Common myeloid progenitor, CD34-positive (primary cell): ENCODE measurements at regions of chrX and their contacts with region 1.

Region 1: GRCh38 chrX:109485470-109486340 is 3.8 kb upstream of the GUCY2F start:
- DNase-seq: peak; percentile 70 to 88 (median 82)
- H3K4me3 ChIP-seq: no peak overlapping the region
- H3K27ac ChIP-seq: no peak overlapping the region
- H3K4me1 ChIP-seq: no peaks in the 10 kb centered on the region
- H3K27me3 ChIP-seq: peaks cover 0 to 8% (median 0%) of the 10 kb centered on the region in 5 experiments

Region 2: DNA sequence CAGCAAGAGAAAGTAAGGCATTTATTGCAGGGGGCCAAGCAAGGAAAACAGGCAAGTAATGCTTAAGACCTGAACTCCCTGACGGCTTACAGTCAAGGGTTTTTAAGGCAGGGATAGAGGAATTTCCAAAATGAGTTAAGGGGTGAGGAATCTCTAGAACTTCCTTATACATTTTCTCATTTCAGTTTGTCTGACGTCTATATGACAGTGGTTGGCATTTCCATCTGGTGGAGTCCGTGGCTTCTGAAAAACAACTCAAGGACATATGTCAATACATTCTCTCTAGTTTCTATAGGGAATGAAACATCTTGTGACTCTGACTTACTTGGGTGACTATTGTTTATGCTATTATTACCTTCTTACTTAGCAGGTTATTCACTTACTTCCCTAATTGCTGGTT is 15.5 kb after region 1 on chrX:
- CTCF ChIA-PET with region 1: no interaction called
- POLR2A ChIA-PET with region 1: no interaction called
- DNase-seq: no peak
- H3K4me3 ChIP-seq: no peak overlapping the region
- H3K27ac ChIP-seq: no peak overlapping the region
- H3K4me1 ChIP-seq: no peaks in the 10 kb centered on the region
- H3K27me3 ChIP-seq: peaks cover 0 to 3% (median 0%) of the 10 kb centered on the region in 5 experiments

Region 3: GRCh38 chrX:109635176-109635575 is 149.5 kb after region 1 on chrX:
- CTCF ChIA-PET with region 1: interaction called, 37 read pairs
- POLR2A ChIA-PET with region 1: no interaction called
- DNase-seq: peak; percentile 19 to 51 (median 31)
- H3K4me3 ChIP-seq: no peak overlapping the region
- H3K27ac ChIP-seq: no peak overlapping the region
- H3K4me1 ChIP-seq: no peaks in the 10 kb centered on the region
- H3K27me3 ChIP-seq: no peaks in the 10 kb centered on the region